CD4-positive, alpha-beta memory T cell (primary cell): ENCODE measurements at regions of chr16 and their contacts with region 1.

Region 1: GRCh38 chr16:72664509-72665225 is 383.3 kb downstream of the ZFHX3 start:
- DNase-seq: peak; percentile 91 to 95 (median 92)
- H3K4me3 ChIP-seq: peak overlapping the region; percentile 67 to 76
- H3K4me3 Mint-ChIP-seq: peak overlapping the region; percentile 99 to 100 (median 100)
- H3K27ac ChIP-seq: peak overlapping the region; percentile 64
- H3K27ac Mint-ChIP-seq: peak overlapping the region; percentile 78 to 100 (median 99)
- H3K4me1 ChIP-seq: peaks cover 18% of the 10 kb centered on the region
- H3K4me1 Mint-ChIP-seq: peaks cover 7 to 24% (median 16%) of the 10 kb centered on the region in 4 donors
- H3K27me3 ChIP-seq: no peaks in the 10 kb centered on the region
- H3K27me3 Mint-ChIP-seq: peaks cover 0 to 2% of the 10 kb centered on the region in 2 donors

Region 2: DNA sequence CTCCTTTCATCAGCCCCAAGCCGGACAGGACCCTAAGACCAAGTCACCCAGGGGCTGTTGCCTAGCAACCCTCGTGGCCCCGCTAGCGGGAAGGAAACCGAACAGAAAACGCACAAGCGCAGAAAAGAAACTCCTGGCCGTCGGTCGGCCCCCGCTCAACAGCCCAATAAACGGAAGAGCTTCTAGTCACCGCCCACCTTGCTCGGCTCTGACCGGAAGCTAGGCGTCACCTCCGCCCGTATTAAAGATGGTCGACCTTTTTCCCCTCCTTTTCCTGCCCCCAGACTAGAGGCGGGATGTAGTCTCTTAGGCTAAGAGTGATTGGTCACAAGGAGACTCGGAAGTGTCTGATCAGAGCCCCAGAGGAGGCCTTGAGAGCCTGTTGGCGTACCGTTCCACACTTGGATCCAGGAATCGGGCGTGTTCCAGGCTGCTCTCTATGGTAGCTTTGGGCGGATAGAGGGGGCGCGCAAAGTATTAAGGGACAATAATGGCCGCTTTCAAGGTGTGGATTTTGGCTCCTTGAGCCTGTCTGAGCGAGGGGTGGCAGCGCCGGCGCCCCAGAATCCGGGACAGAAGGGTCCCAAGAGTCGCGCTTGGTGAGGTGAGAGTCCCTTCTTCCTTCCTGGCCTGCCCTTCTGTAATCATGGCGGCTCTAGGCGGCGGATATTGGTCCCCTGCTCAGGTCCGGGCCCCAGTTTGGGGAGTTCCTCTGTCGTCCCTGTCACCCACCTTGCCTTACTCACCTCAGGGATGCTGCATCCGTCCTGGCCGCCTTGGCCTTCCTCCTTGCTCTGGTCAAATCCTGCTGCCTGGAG is 571.0 kb before region 1 on chr16 and contains the starts of genes DHX38 and TXNL4B:
- CTCF ChIA-PET with region 1: no interaction called
- POLR2A ChIA-PET with region 1: no interaction called
- intact Hi-C with region 1: loop called (anchors 5 kb)
- DNase-seq: peak; percentile 92 to 97 (median 94)
- H3K4me3 ChIP-seq: peak within 1 kb of the TSS; percentile 82 to 88
- H3K4me3 Mint-ChIP-seq: peak within 1 kb of the TSS; percentile 97 to 100 (median 100)
- H3K27ac ChIP-seq: peak within 1 kb of the TSS; percentile 90
- H3K27ac Mint-ChIP-seq: peak within 1 kb of the TSS; percentile 90 to 100 (median 100)
- H3K4me1 ChIP-seq: peaks cover 43% of the 10 kb centered on the region
- H3K4me1 Mint-ChIP-seq: peaks cover 39 to 62% (median 47%) of the 10 kb centered on the region in 4 donors
- H3K27me3 ChIP-seq: no peaks in the 10 kb centered on the region
- H3K27me3 Mint-ChIP-seq: no peaks in the 10 kb centered on the region
- total RNA-seq, gene DHX38: 109 to 120 TPM
- total RNA-seq, gene TXNL4B: 23.7 to 26.1 TPM

Region 3: DNA sequence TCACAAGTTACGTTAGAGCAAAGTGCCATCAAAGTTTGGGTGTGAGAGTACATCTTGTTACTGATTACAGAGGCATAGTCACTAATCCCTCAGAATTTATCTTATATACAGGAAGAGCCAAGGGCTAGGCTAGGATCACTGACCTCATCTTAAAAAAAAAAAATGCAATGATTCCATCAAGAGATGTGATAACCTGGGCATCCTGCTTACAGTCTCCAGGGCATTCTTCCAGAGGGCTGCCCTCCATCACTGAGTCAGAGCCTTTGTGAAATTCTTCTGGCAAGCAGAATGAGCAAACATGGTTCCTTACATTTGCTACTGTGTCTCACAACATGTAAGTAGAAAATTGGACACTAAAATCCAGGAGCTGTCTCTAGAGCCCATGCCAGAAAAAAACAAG is 27.4 kb before region 1 on chr16:
- CTCF ChIA-PET with region 1: no interaction called
- POLR2A ChIA-PET with region 1: no interaction called
- intact Hi-C with region 1: no loop called
- DNase-seq: no peak
- H3K4me3 ChIP-seq: no peak overlapping the region
- H3K4me3 Mint-ChIP-seq: no peak overlapping the region
- H3K27ac ChIP-seq: no peak overlapping the region
- H3K27ac Mint-ChIP-seq: no peak overlapping the region
- H3K4me1 ChIP-seq: no peaks in the 10 kb centered on the region
- H3K4me1 Mint-ChIP-seq: peaks cover 0 to 3% (median 0%) of the 10 kb centered on the region in 4 donors
- H3K27me3 ChIP-seq: no peaks in the 10 kb centered on the region
- H3K27me3 Mint-ChIP-seq: no peaks in the 10 kb centered on the region

Region 4: GRCh38 chr16:72711823-72712222 is 47.2 kb after region 1 on chr16:
- CTCF ChIA-PET with region 1: no interaction called
- POLR2A ChIA-PET with region 1: no interaction called
- intact Hi-C with region 1: no loop called
- DNase-seq: no peak
- H3K4me3 ChIP-seq: no peak overlapping the region
- H3K4me3 Mint-ChIP-seq: no peak overlapping the region
- H3K27ac ChIP-seq: no peak overlapping the region
- H3K27ac Mint-ChIP-seq: no peak overlapping the region
- H3K4me1 ChIP-seq: no peaks in the 10 kb centered on the region
- H3K4me1 Mint-ChIP-seq: no peaks in the 10 kb centered on the region
- H3K27me3 ChIP-seq: no peaks in the 10 kb centered on the region
- H3K27me3 Mint-ChIP-seq: no peaks in the 10 kb centered on the region

Region 5: GRCh38 chr16:72787514-72788268 is 123.0 kb after region 1 on chr16:
- CTCF ChIA-PET with region 1: no interaction called
- POLR2A ChIA-PET with region 1: no interaction called
- intact Hi-C with region 1: loop called (anchors 10 kb)
- DNase-seq: peak; percentile 19 to 62 (median 49)
- H3K4me3 ChIP-seq: peak overlapping the region in 1 of 2 donors; percentile 38
- H3K4me3 Mint-ChIP-seq: peak overlapping the region; percentile 81 to 88 (median 86)
- H3K27ac ChIP-seq: no peak overlapping the region
- H3K27ac Mint-ChIP-seq: peak overlapping the region in 6 of 7 donors; percentile 23 to 89 (median 55)
- H3K4me1 ChIP-seq: peaks cover 3% of the 10 kb centered on the region
- H3K4me1 Mint-ChIP-seq: peaks cover 3 to 17% (median 11%) of the 10 kb centered on the region in 4 donors
- H3K27me3 ChIP-seq: no peaks in the 10 kb centered on the region
- H3K27me3 Mint-ChIP-seq: peaks cover 7 to 14% of the 10 kb centered on the region in 2 donors